ENCODE measurements at regions of chr17 and their contacts with region 1.

Region 1: DNA sequence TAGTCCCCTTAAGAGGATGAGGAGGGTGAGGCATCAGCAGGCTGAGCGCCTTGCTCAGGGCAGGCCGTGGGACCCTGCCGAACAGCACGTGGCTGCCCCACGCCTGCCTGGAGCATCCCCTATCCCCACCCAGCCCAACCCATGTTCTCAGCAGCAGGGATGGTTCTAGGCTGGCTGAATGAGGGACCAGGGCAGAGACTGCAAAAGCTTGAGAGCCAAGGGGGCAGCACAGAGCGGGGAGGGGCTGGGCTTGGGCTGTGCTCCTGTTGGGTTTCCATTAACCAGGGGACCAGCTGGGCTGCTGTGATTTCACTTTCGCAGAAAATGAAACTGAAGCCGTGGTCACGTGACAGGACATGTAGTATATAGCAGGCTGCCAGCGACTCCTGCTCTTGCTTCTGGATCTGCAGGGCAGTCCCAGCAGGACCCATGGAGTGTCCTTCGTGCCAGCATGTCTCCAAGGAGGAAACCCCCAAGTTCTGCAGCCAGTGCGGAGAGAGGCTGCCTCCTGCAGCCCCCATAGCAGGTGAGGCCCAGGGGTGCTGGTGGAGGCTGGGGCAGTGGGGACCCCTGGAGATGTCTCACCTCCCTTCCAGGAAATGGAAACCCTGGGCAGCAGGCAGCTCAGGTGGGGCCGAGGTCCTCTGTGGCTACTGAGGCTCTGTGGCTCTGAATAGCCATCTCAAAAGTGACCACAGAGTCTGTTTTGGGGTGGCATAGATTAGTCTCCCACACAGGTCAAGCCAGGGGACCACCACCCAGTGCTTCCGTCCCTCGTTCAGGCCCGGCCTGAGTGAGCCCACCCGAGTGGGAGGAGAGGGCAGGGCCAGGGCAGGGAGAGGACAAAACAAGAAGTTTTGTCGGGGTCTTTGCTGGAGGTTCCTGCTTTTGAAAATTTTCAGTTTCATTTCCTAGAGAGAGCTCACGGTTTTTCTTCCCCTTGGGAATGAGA is 2.9 kb downstream of the RNF213 start:
- DNase-seq: peak in 6 of 10 donors; percentile 16 to 83 (median 44)

Region 2: DNA sequence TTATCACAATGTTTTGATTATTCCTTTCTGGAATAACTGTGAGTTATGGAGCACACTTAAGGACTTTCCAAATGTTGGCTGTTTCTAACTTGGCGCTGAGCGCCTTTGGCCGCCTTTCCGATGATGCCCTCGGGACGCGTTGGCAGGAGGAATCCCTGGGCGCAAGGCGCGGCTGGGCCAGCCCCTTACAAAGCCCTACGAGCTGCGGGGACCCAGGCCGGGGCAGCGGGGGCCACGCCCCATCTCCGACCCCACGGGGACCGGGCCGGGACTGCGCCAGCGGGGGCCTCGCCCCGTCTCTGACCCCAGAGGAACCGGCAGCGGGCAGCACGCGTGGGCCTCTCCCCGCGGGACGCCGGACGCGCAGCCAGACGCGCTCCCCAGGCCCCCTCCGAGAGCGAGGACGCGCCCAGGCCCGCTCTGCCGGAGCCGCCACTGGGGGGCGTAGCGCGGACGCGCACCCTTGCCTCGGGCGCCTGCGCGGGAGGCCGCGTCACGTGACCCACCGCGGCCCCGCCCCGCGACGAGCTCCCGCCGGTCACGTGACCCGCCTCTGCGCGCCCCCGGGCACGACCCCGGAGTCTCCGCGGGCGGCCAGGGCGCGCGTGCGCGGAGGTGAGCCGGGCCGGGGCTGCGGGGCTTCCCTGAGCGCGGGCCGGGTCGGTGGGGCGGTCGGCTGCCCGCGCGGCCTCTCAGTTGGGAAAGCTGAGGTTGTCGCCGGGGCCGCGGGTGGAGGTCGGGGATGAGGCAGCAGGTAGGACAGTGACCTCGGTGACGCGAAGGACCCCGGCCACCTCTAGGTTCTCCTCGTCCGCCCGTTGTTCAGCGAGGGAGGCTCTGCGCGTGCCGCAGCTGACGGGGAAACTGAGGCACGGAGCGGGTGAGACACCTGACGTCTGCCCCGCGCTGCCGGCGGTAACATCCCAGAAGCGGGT is 162.3 kb before region 1 on chr17 and contains the start of gene GAA:
- intact Hi-C with region 1: loop called (anchors 10 kb)
- DNase-seq: peak; percentile 68 to 97 (median 77)

Region 3: DNA sequence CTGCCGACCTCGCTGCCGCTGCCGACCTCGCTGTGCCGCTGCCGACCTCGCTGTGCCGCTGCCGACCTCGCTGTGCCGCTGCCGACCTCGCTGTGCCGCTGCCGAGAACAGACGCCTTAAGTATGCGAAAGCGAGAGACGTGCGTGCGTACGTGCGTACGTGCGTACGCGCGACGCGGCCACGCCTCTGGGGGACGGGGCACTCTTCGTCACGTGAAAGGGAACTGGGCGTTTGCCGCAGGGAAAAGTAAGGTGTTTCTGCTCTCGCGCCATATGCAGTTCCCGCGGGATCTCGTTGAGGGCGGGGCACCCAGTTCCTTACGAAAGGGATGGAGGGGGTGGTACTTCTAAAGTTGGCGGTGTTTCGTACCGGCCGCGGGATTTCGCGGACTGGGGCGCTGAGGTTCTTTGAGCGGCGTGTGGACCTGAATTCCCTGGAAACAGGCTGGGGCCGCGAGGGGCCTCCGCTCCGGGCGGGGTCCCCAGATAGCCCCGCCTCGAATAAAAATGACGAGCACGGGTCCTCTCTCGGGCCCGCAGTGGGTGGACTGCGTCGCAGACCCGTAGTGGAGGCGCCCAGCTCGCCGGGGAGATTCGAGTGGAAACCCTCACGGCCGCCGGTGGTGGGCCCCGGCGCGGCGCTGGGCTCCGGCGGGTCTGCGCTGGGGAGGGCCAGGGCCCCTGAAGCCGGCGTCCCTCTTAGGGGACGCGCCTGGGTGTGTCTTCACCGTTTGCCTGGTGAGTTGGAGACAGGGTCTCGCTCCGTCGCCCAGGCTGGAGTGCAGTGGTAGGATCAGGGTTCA is 116.3 kb before region 1 on chr17 and contains the start of gene EIF4A3:
- intact Hi-C with region 1: loop called (anchors 5 kb)
- DNase-seq: peak; percentile 95 to 100 (median 97)